ENCODE measurements at regions of chr17 and their contacts with region 1.

Region 1: GRCh38 chr17:40559954-40560591 is 5.2 kb downstream of the CCR7 start:
- DNase-seq: peak; percentile 89
- ATAC-seq: peak; percentile 41
- H3K4me3 Mint-ChIP-seq: peak overlapping the region; percentile 86
- H3K27ac Mint-ChIP-seq: peak overlapping the region; percentile 93
- H3K4me1 Mint-ChIP-seq: peaks cover 89% of the 10 kb centered on the region
- H3K27me3 Mint-ChIP-seq: no peaks in the 10 kb centered on the region

Region 2: DNA sequence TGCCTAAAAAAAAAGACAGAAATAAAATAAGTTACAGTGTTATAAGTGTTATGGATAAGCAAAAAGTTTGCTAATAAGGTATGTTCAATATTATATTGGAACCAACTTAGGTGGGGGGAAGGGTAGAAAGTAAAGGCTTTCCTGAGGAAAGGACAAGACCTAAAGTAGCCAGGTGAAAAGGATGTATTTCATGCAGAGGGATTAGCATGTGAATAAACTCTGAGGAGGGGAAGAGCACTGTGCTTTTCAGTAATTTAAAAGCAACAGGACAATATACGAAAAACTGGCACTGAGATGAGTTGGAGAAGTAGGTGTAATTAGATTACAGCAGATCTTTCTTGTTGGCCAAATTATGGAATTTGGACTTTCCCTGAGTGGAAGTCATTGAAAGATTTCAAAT is 150.0 kb before region 1 on chr17:
- CTCF ChIA-PET with region 1: interaction called, 11 read pairs
- POLR2A ChIA-PET with region 1: interaction called, 3 read pairs
- DNase-seq: no peak
- ATAC-seq: no peak
- H3K4me3 Mint-ChIP-seq: no peak overlapping the region
- H3K27ac Mint-ChIP-seq: peak overlapping the region; percentile 27
- H3K4me1 Mint-ChIP-seq: peaks cover 41% of the 10 kb centered on the region
- H3K27me3 Mint-ChIP-seq: no peaks in the 10 kb centered on the region

Region 3: GRCh38 chr17:40443583-40444327 is 116.3 kb before region 1 on chr17:
- CTCF ChIA-PET with region 1: interaction called, 15 read pairs
- POLR2A ChIA-PET with region 1: no interaction called
- DNase-seq: peak; percentile 79
- ATAC-seq: peak; percentile 83
- H3K4me3 Mint-ChIP-seq: peak overlapping the region; percentile 82
- H3K27ac Mint-ChIP-seq: peak overlapping the region; percentile 92
- H3K4me1 Mint-ChIP-seq: peaks cover 59% of the 10 kb centered on the region
- H3K27me3 Mint-ChIP-seq: peaks cover 2% of the 10 kb centered on the region

Region 4: GRCh38 chr17:40542558-40543411 is 17.3 kb before region 1 on chr17:
- CTCF ChIA-PET with region 1: interaction called, 618 read pairs
- POLR2A ChIA-PET with region 1: interaction called, 328 read pairs
- DNase-seq: peak; percentile 51
- ATAC-seq: peak; percentile 6
- H3K4me3 Mint-ChIP-seq: peak overlapping the region; percentile 44
- H3K27ac Mint-ChIP-seq: peak overlapping the region; percentile 93
- H3K4me1 Mint-ChIP-seq: peaks cover 91% of the 10 kb centered on the region
- H3K27me3 Mint-ChIP-seq: no peaks in the 10 kb centered on the region

Region 5: DNA sequence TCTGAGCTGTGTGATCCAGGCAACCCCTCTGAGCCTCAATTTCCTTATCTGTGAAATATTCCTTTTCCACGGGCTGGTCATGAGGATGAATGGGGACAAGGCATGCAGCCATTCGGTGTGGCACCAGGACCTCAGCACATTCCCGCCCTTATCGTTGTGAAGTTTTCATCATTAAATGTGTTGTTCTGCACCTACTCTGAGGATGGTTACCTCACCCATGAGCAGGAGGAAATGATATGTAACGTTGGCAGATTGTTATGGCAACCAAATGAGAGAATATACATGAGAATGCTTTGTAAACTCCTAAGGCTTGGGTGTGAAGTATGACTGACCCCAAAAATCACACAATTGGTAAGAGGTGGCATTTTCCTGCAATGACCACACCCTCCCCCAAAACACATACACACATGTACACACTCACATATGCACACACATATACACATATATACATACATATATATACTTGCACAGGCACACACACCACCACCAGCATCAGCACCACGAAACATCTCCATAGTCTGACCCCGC is 48.1 kb after region 1 on chr17:
- CTCF ChIA-PET with region 1: interaction called, 313 read pairs
- POLR2A ChIA-PET with region 1: interaction called, 454 read pairs
- DNase-seq: peak; percentile 59
- ATAC-seq: peak; percentile 73
- H3K4me3 Mint-ChIP-seq: peak overlapping the region; percentile 44
- H3K27ac Mint-ChIP-seq: peak overlapping the region; percentile 88
- H3K4me1 Mint-ChIP-seq: peaks cover 98% of the 10 kb centered on the region
- H3K27me3 Mint-ChIP-seq: no peaks in the 10 kb centered on the region

Region 6: DNA sequence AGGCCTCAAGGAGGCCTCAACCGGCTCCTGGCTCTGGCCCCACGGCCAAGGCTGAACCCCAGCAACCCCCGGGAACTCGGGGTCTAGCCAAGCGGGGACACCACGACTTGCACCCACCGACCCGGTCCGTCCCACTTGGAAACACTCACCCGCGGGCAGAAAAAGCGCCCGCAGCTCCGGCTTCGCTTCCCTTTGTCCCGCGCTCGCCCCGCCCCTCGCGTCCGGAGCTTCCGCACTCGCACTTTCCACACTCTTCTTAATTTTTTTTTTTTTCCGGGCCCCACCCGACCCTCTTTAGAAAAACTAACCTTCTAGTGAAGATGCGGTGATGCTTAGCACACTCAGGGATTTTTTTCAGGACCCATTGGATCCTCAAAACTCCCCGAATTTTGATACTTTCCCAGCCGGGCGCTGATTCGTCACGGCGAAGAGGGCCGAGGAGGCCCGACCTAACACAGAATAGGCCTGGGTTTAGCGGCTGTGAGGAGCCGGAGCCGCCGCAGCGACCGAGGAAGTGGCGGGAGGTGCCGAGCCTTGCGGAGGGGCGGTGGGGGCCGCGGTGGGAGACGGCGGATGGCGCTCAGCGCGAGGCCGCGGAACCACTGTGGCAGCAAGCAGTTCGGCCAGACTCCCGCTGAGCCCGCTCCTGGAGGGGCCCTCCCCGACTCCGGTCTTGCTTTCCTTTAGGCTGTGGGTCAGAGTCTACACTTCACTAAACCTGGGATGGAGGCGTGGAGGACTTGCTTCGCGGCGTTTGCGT is 87.7 kb after region 1 on chr17 and contains the start of gene SMARCE1:
- CTCF ChIA-PET with region 1: interaction called, 63 read pairs
- POLR2A ChIA-PET with region 1: interaction called, 16 read pairs
- DNase-seq: peak; percentile 78
- ATAC-seq: peak; percentile 79
- H3K4me3 Mint-ChIP-seq: peak within 1 kb of the TSS; percentile 96
- H3K27ac Mint-ChIP-seq: peak within 1 kb of the TSS; percentile 97
- H3K4me1 Mint-ChIP-seq: peaks cover 45% of the 10 kb centered on the region
- H3K27me3 Mint-ChIP-seq: no peaks in the 10 kb centered on the region
- total RNA-seq, gene SMARCE1: 104 to 110 TPM